Lower leg skin (tissue), 4 donors: ENCODE measurements at regions of chr22 and their contacts with region 1.

Region 1: DNA sequence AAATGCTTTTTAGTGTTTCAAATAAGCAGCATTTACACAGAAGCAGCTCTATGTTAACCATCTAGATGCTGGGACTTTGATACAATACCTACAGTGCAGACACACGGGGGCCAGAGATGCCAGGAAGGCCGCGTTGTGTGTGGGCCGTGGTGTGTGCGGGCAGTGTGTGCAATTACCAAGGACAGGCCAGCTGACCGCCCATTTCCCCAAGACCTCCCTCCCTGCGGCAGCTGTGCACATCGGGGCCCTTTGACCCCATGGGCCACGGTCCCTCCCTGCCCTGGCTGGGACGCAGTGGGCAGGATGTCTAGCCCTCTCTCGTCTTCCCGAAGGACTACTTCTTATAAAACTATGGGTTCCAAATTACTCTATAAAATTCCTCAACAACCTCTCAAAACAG is 38.4 kb downstream of the CLTCL1 start:
- DNase-seq: no peak
- H3K4me3 ChIP-seq: no peak overlapping the region
- CTCF ChIP-seq: no peak
- POLR2A ChIP-seq: no peak

Region 2: DNA sequence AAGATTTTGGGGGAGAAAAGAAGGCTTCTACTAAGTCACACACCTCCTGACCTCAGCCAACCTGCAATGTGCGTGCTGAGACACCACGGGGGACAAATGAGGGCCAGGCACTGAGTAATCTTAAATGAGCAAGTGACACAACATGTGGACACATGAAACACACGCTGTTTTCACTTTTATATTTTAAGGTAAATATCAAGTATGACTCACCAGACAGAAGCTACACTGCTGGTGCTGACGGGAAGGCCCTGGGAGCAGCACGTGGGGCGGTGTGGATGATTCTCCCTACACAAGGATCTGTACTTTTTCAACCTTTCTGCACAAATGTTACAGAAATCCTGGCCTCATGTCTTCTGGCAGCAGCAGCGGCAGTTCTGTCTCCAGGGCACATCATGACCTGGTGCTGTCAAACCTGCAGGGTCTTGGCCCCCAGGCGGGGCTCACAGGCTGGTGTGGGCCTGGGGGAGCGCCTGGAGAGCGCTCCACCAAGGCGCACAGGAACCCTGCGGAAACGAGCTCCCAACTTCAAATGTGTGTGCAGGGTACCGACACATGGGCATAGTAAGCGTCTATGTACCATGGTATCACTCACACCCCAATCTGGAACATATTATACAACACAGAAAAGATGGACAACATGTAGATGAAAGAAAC is 192.7 kb before region 1 on chr22:
- intact Hi-C with region 1: loop called (anchors 5 kb)
- DNase-seq: peak in 1 of 2 donors; percentile 65
- H3K4me3 ChIP-seq: no peak overlapping the region
- CTCF ChIP-seq: no peak
- POLR2A ChIP-seq: no peak

Region 3: DNA sequence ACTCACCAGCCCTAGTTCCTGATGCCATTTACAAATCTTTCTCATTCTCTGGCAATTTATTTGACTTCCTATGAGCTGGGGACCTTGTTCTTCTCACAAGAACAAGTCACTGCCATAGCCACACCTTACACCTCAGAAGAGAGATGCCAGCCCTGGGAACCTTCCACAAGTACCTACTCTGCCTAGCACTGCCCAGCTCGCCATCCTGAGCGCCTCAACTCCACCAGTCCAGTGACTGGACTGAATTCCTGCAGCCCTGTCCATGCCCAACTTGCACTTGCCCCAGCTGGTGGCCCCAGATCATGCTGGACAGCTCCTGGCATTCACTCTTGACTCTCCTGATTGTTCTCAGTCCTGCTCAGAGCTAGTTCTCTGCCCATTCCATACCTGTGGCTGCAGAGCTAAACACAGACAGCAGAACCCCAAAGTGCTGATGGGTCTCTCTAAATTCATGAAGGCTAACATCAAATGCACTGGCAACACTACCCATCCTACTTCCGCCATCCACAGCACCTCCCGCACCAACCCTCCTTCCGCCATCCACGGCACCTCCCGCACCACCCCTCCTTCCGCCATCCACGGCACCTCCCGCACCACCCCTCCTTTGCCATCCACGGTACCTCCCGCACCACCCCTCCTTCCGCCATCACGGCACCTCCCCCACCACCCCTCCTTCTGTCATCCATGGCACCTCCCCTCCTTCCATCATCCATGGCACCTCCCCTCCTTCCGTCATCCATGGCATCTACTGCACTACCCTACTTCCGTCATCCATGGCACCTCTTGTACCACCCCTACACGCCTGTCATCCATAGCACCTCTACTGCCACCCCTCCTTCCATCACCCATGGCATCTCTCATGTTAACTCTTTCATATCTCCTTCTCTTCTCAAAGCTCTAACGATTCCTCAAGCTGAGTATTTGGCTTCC is 51.0 kb before region 1 on chr22:
- intact Hi-C with region 1: no loop called
- DNase-seq: no peak
- H3K4me3 ChIP-seq: no peak overlapping the region
- CTCF ChIP-seq: no peak
- POLR2A ChIP-seq: no peak